ENCODE measurements at regions of chr6 and their contacts with region 1.

Region 1: DNA sequence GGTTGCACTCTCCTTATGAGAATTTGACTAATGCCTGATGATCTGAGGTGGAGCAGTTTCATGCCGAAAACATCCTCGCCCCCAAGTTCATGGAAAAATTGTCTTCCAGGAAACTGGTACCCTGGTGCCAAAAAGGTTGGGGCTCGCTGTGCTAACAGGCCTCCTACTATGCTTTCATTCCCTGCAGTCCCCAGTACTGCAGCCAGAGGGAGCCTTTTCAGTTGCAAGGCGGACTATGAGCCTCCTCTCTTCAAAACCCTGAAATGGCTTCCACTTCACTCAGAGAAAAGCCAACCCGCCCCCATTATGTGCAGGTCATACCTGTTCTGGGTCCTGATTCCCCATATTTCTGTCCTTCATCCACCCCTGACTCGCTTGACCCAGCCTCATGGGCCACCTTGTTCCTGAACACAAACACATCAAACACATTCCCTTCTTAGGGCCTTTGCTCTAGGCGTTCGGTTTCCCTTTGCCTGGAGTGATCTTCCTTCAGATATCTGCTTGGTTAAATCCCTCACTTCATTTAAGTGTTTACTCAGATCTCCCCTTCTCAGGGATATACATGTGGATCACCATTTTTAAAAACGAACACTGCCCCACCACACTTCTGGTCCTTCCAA is 173.7 kb downstream of the PHACTR1 start:
- DNase-seq: no peak
- ATAC-seq: no peak
- H3K4me3 ChIP-seq: no peak overlapping the region
- H3K27ac ChIP-seq: no peak overlapping the region
- H3K4me1 ChIP-seq: peaks cover 0 to 18% (median 5%) of the 10 kb centered on the region in 12 donors
- H3K27me3 ChIP-seq: no peaks in the 10 kb centered on the region
- CTCF ChIP-seq: peak in 9 of 12 donors; percentile 12 to 42 (median 34)
- POLR2A ChIP-seq: no peak

Region 2: DNA sequence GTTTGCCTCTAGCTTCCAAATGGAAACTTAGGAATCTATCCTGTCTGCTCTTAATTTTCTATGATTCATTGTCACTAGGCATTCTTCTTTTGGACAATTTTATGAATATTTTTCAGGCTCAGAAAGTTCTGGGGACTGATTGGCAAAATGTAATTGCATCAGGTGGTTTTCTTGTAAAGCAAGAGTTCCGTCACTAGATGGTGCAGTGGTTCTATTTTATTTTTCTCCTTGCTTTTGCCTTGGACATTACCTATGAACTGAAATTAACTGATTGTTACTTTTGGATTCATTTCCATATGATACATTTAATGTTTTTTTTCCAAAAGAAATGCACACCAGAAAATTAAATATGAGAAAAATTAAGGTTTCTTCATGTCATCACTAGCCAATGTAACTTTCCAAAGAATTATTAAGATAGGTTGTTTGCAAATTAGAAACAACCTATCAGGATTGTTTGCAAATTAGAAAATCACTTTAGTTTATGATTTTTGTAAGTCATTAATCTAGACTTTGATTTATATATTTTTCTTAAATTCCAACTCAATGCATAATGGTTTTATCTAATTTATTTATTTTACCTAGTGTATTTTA is 1304.8 kb before region 1 on chr6:
- intact Hi-C with region 1: loop called in 3 of 10 experiments (anchors 10 kb)
- DNase-seq: no peak
- ATAC-seq: peak in 1 of 4 donors; percentile 41
- H3K4me3 ChIP-seq: no peak overlapping the region
- H3K27ac ChIP-seq: no peak overlapping the region
- H3K4me1 ChIP-seq: peaks cover 0 to 5% (median 0%) of the 10 kb centered on the region in 12 donors
- H3K27me3 ChIP-seq: no peaks in the 10 kb centered on the region
- CTCF ChIP-seq: peak; percentile 47 to 75 (median 70)
- POLR2A ChIP-seq: no peak

Region 3: GRCh38 chr6:12637960-12638641 is 252.2 kb before region 1 on chr6:
- intact Hi-C with region 1: loop called (anchors 2 to 10 kb)
- DNase-seq: peak in 3 of 5 donors; percentile 20 to 30 (median 28)
- ATAC-seq: peak in 3 of 4 donors; percentile 42 to 74 (median 53)
- H3K4me3 ChIP-seq: no peak overlapping the region
- H3K27ac ChIP-seq: no peak overlapping the region
- H3K4me1 ChIP-seq: peaks cover 0 to 5% (median 0%) of the 10 kb centered on the region in 12 donors
- H3K27me3 ChIP-seq: no peaks in the 10 kb centered on the region
- CTCF ChIP-seq: peak; percentile 40 to 71 (median 57)
- POLR2A ChIP-seq: no peak

Region 4: GRCh38 chr6:13814176-13814937 is 924.1 kb after region 1 on chr6 and contains the start of gene MCUR1:
- intact Hi-C with region 1: loop called in 1 of 10 experiments (anchors 10 kb)
- DNase-seq: peak; percentile 88 to 94 (median 92)
- ATAC-seq: peak; percentile 89 to 96 (median 94)
- H3K4me3 ChIP-seq: peak within 1 kb of the TSS; percentile 67 to 97 (median 88)
- H3K27ac ChIP-seq: peak within 1 kb of the TSS; percentile 81 to 99 (median 97)
- H3K4me1 ChIP-seq: peaks cover 4 to 42% (median 34%) of the 10 kb centered on the region in 12 donors
- H3K27me3 ChIP-seq: no peaks in the 10 kb centered on the region
- CTCF ChIP-seq: peak in 6 of 12 donors; percentile 7 to 51 (median 38)
- POLR2A ChIP-seq: peak in 1 of 2 donors; percentile 72
- total RNA-seq, gene MCUR1: 16.3 to 32.1 (median 28.0) TPM